Endothelial cell of umbilical vein (primary cell): ENCODE measurements at regions of chr22 and their contacts with region 1.

Region 1: DNA sequence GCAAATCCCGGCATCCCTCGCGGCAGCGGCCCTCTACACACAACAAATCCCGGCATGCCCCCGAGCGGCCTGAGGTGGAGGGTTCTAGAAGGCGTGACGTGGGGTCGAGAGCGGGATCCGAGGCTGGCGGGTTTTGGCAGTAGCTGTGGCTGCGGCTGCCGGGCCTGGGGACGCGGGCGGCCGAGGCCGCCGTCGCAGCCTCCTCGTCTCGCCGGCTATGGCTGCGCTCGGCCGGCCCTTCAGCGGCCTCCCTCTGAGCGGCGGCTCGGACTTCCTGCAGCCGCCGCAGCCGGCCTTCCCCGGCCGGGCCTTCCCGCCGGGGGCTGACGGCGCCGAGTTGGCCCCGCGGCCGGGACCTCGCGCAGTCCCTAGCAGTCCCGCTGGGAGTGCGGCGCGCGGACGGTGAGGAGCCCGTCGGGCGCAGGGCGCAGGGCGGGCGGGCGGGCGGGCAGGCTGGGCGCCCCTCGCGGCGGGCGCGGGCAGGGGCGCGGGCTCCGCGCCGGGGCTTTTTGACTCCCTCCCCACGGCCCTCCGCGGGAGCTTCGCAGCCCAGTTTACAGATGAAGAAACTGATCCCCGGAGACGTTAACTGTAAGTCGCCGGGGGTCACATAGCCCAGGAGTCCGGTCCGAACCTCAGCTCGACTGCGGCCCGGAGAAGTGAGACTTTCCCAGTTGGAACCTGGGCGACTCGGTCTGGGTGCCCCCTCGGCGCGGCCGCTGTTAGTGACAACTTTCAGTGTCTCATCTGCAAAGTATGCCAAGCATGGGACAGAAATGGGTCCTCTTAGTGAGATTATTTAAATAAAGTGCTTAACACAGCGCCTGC is at the start of gene CCDC117:
- DNase-seq: peak; percentile 94
- H3K4me3 ChIP-seq: peak within 1 kb of the TSS; percentile 31 to 85 (median 51)
- H3K27ac ChIP-seq: peak within 1 kb of the TSS; percentile 79
- H3K4me1 ChIP-seq: peaks cover 4% of the 10 kb centered on the region
- H3K27me3 ChIP-seq: no peaks in the 10 kb centered on the region
- CTCF ChIP-seq: peak; percentile 28 to 37
- POLR2A ChIP-seq: peak; percentile 93
- total RNA-seq, gene CCDC117: 22.8 and 23.3 TPM in 2 replicates

Region 2: DNA sequence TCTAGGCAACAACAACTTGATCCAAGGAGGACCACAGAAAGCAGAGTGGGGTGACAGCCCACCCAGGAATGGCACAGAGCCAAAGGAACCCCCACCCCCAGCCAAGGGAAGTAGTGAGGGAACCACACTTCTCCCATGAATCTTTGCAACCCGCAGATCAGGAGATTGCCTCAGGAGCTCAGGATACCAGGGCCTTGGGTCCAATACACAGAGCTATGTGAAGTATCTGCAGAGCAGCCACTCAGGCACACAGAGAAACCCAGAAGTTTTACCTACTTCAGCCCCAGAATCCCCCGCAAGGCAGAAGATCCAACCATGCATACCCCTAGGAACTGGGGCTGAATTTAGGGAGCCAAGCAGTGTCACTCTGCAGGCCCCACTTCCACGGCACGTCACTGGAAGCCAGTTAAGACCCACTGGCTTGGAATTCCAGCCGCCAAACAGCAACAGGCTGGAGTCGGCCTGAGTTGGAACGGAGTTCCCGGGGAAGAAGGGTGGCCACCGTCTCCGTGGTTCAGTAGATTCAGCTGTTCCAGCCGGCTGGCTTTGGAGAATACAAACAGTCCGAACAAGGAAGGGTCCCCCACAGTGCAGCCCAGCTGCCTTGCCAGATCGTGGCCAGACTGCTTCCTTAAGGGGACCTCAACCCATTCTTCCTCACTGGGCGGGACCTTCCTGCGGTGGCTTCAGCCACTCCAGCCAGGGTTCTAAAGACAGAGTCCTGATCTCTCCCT is 267.3 kb before region 1 on chr22:
- CTCF ChIA-PET with region 1: no interaction called
- POLR2A ChIA-PET with region 1: no interaction called
- dilution Hi-C with region 1: no loop called
- intact Hi-C with region 1: no loop called
- DNase-seq: no peak
- H3K4me3 ChIP-seq: no peak overlapping the region
- H3K27ac ChIP-seq: no peak overlapping the region
- H3K4me1 ChIP-seq: no peaks in the 10 kb centered on the region
- H3K27me3 ChIP-seq: no peaks in the 10 kb centered on the region
- CTCF ChIP-seq: no peak
- POLR2A ChIP-seq: no peak

Region 3: GRCh38 chr22:28674121-28674563 is 98.7 kb before region 1 on chr22:
- CTCF ChIA-PET with region 1: interaction called, 6 read pairs
- POLR2A ChIA-PET with region 1: no interaction called
- dilution Hi-C with region 1: no loop called
- intact Hi-C with region 1: loop called (anchors 2 kb)
- DNase-seq: no peak
- H3K4me3 ChIP-seq: no peak overlapping the region
- H3K27ac ChIP-seq: no peak overlapping the region
- H3K4me1 ChIP-seq: peaks cover 2% of the 10 kb centered on the region
- H3K27me3 ChIP-seq: no peaks in the 10 kb centered on the region
- CTCF ChIP-seq: no peak
- POLR2A ChIP-seq: no peak

Region 4: DNA sequence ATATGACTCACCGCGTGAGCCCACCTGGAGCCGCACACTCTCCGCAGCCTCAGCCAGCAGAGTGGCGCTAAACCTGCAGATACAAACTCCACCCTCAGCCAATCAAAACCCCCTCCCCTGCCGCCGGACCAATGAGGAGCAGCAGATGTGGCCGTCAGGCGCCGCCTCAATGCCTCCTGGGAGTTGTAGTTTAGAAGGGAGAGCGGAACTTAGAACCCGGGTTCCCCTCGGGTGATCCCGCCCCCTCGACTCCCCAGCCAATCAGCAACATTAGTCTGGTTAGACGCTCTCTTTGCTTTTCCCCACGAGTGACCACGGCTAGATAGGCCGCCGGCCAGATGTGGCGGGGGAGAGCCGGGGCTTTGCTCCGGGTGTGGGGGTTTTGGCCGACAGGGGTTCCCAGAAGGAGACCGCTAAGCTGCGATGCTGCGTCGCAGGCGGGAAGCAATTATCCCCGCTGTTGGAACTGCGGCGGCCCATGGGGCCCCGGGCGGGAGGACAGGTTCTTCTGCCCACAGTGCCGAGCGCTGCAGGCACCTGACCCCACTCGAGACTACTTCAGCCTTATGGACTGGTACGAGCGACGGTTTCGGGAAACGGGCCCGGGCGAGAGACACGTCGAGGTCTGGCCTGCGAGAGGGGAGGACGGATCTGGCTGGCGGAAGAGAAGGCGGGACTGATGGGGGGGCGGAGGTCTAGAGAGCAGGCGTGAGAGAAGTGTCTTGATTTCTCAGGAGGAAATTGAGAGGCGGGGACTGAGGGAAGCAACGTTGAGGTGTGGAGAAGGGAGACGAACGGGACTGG is 30.9 kb before region 1 on chr22 and contains the starts of genes CHEK2 and HSCB:
- CTCF ChIA-PET with region 1: interaction called, 3 read pairs
- POLR2A ChIA-PET with region 1: no interaction called
- dilution Hi-C with region 1: no loop called
- intact Hi-C with region 1: loop called (anchors 1 kb)
- DNase-seq: peak; percentile 99
- H3K4me3 ChIP-seq: peak within 1 kb of the TSS; percentile 75 to 87 (median 77)
- H3K27ac ChIP-seq: peak within 1 kb of the TSS; percentile 84
- H3K4me1 ChIP-seq: peaks cover 12% of the 10 kb centered on the region
- H3K27me3 ChIP-seq: no peaks in the 10 kb centered on the region
- CTCF ChIP-seq: peak in 1 of 2 donors; percentile 11
- POLR2A ChIP-seq: no peak
- total RNA-seq, gene CHEK2: 24.6 and 27.4 TPM in 2 replicates
- total RNA-seq, gene HSCB: 14.1 and 20.3 TPM in 2 replicates

Region 5: DNA sequence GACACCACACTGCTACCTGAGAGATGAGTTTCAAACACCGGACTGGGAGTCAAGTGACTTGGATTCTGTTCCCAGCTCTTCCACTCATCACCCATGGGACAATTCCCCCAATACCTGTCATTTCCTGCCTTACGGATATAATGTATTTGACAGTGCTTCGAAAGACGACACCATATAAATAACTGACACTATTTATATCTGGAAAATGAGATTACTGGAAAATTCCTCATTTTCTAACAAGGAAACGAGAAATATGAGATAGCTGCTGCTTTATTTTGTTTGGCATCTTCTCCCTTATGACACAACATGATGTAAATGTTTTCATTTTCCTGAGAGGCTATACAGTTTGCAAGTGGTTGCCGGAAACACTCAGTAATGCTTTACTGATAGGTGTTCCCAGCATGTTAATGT is 22.4 kb before region 1 on chr22:
- CTCF ChIA-PET with region 1: interaction called, 4 read pairs
- POLR2A ChIA-PET with region 1: no interaction called
- dilution Hi-C with region 1: no loop called
- intact Hi-C with region 1: loop called (anchors 1 kb)
- DNase-seq: peak; percentile 96
- H3K4me3 ChIP-seq: peak overlapping the region in 1 of 3 experiments; percentile 9
- H3K27ac ChIP-seq: peak overlapping the region; percentile 73
- H3K4me1 ChIP-seq: peaks cover 20% of the 10 kb centered on the region
- H3K27me3 ChIP-seq: no peaks in the 10 kb centered on the region
- CTCF ChIP-seq: no peak
- POLR2A ChIP-seq: no peak

Region 6: DNA sequence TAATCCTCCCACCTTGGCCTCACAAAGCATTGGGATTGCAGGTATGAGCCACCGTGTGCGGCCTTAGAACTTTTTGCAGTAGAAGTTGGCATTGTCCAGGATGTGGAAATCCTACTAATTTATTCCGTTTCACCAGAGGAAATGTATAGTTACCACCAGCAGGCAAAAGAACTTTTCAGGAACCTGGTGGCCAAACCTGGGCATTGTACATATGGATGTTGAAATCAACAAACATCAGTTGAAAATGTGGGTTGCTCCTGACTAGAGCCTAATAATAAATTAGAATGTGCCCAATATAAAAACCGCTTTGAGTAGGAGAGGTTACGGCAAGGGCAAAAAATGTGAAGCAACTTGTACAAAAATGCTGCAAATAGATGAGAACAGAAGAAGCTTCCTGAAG is 68.3 kb after region 1 on chr22:
- CTCF ChIA-PET with region 1: no interaction called
- POLR2A ChIA-PET with region 1: no interaction called
- dilution Hi-C with region 1: no loop called
- intact Hi-C with region 1: no loop called
- DNase-seq: no peak
- H3K4me3 ChIP-seq: no peak overlapping the region
- H3K27ac ChIP-seq: no peak overlapping the region
- H3K4me1 ChIP-seq: no peaks in the 10 kb centered on the region
- H3K27me3 ChIP-seq: no peaks in the 10 kb centered on the region
- CTCF ChIP-seq: no peak
- POLR2A ChIP-seq: no peak